ENCODE measurements at regions of chr2 and their contacts with region 1.

Region 1: GRCh38 chr2:10717613-10718012 is 3.8 kb upstream of the ATP6V1C2 start:
- DNase-seq: peak; percentile 87
- H3K4me3 ChIP-seq: no peak overlapping the region
- H3K27ac ChIP-seq: peak overlapping the region; percentile 67
- H3K4me1 ChIP-seq: peaks cover 27% of the 10 kb centered on the region
- H3K27me3 ChIP-seq: peaks cover 15 to 23% of the 10 kb centered on the region in 2 experiments
- CTCF ChIP-seq: no peak
- POLR2A ChIP-seq: no peak

Region 2: GRCh38 chr2:10688921-10689807 is 28.4 kb before region 1 on chr2:
- CTCF ChIA-PET with region 1: no interaction called
- POLR2A ChIA-PET with region 1: no interaction called
- dilution Hi-C with region 1: no loop called
- intact Hi-C with region 1: loop called (anchors 1 kb)
- DNase-seq: peak; percentile 28
- H3K4me3 ChIP-seq: peak overlapping the region; percentile 71 to 92 (median 85)
- H3K27ac ChIP-seq: peak overlapping the region; percentile 80
- H3K4me1 ChIP-seq: peaks cover 18% of the 10 kb centered on the region
- H3K27me3 ChIP-seq: no peaks in the 10 kb centered on the region
- CTCF ChIP-seq: no peak
- POLR2A ChIP-seq: no peak